ENCODE measurements at regions of chrX and their contacts with region 1.

Region 1: DNA sequence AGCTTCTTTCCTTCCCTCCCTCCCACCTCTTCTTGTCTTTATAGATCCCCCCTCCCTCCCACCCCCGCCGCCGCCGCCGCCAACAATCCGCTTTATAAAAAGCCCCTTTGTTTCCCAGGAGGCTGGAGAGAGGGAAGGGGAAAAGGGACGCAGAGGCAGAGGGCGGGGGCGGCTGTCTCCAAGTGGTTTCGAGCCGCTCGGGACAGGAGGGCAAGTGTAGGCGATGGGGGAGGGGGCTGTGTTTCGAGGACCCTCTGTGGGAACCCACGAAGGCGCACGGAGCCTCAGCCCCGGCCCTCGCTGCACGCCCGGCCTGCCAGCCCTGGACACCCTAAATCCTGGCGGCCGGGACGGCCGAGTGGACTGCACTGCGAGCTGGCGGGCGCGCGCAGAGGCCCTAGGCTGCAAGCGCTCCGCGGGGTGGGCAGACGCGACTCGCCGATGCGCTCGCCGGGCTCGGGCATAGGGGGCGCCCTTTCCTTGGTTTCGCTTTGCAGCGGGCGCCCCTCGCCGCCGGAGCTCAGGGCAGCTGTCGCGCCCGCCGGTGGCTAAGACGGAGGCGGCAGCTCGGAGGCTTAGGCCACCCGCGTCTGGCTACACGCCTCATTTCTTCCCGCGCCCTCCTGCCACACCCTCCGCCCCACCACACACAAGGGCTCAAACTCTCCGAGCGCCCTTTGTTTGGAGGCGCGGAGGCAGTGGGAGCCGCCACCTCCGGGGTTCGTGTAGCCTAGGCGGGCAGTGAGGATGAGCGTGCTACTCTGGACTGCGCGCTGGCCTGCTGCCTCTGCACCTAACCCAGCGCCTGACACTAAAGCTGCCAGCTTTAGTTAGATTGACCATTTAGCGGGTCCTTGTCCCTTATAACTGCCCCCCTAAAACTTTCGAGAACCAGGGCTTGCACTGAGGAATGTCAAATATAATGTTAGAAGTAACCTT is 2.2 kb downstream of the MAMLD1 start:
- DNase-seq: peak; percentile 71
- H3K4me3 ChIP-seq: peak overlapping the region; percentile 59 to 74
- H3K27ac ChIP-seq: peak overlapping the region; percentile 87 to 88
- H3K4me1 ChIP-seq: no peaks in the 10 kb centered on the region
- H3K27me3 ChIP-seq: no peaks in the 10 kb centered on the region
- CTCF ChIP-seq: peak; percentile 44 to 52 (median 48)
- POLR2A ChIP-seq: no peak

Region 2: GRCh38 chrX:150165776-150166610 is 199.3 kb before region 1 on chrX:
- intact Hi-C with region 1: no loop called
- DNase-seq: no peak
- H3K4me3 ChIP-seq: no peak overlapping the region
- H3K27ac ChIP-seq: no peak overlapping the region
- H3K4me1 ChIP-seq: no peaks in the 10 kb centered on the region
- H3K27me3 ChIP-seq: no peaks in the 10 kb centered on the region
- CTCF ChIP-seq: no peak
- POLR2A ChIP-seq: no peak

Region 3: DNA sequence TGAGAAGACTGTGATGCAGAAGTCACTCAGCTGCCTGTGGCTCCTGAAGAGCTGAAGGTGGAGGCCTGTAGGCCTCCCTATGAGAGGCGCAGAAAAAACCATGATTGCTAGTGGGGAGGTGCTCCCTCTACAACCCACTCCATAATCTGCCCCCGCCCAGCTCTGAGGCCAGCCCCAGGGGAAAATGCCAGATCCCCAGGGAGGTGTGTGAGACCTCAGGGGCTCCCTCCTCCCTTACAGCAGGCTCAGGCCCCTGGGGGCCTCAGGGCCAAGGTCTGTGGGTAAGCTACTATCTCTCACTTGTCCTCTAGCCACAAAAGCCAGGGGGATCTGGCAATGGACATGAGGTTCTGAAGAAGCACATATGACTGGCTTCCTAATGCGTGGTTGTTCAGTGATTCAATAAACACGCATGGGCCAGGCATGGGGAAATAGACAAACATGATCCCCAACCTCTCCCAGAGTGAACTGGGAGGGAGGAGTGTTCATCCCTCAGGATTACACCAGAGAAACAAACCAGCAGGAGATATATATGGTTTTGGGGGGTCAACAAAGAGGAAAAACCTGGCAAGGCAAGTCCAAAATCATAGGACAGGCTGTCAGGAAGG is 152.1 kb after region 1 on chrX:
- intact Hi-C with region 1: loop called (anchors 10 kb)
- DNase-seq: no peak
- H3K4me3 ChIP-seq: no peak overlapping the region
- H3K27ac ChIP-seq: no peak overlapping the region
- H3K4me1 ChIP-seq: no peaks in the 10 kb centered on the region
- H3K27me3 ChIP-seq: no peaks in the 10 kb centered on the region
- CTCF ChIP-seq: no peak
- POLR2A ChIP-seq: no peak

Measured in testis (tissue), 5 donors.